Right lobe of liver (tissue), 6 donors: ENCODE measurements at regions of chr4 and their contacts with region 1.

Region 1: GRCh38 chr4:184889666-184890335 is 64.0 kb upstream of the ACSL1 start:
- DNase-seq: no peak
- ATAC-seq: no peak
- H3K4me3 ChIP-seq: no peak overlapping the region
- H3K27ac ChIP-seq: no peak overlapping the region
- H3K4me1 ChIP-seq: peaks cover 0 to 85% (median 36%) of the 10 kb centered on the region in 4 donors
- H3K27me3 ChIP-seq: no peaks in the 10 kb centered on the region
- CTCF ChIP-seq: no peak
- POLR2A ChIP-seq: no peak

Region 2: GRCh38 chr4:184815046-184815877 is 74.5 kb before region 1 on chr4:
- intact Hi-C with region 1: loop called in 1 of 2 experiments (anchors 10 kb)
- DNase-seq: peak; percentile 86 to 92 (median 91)
- ATAC-seq: peak; percentile 47 to 65 (median 54)
- H3K4me3 ChIP-seq: peak overlapping the region; percentile 3 to 41 (median 36)
- H3K27ac ChIP-seq: peak overlapping the region; percentile 89 to 98 (median 90)
- H3K4me1 ChIP-seq: peaks cover 0 to 82% (median 36%) of the 10 kb centered on the region in 4 donors
- H3K27me3 ChIP-seq: no peaks in the 10 kb centered on the region
- CTCF ChIP-seq: no peak
- POLR2A ChIP-seq: peak; percentile 63

Region 3: DNA sequence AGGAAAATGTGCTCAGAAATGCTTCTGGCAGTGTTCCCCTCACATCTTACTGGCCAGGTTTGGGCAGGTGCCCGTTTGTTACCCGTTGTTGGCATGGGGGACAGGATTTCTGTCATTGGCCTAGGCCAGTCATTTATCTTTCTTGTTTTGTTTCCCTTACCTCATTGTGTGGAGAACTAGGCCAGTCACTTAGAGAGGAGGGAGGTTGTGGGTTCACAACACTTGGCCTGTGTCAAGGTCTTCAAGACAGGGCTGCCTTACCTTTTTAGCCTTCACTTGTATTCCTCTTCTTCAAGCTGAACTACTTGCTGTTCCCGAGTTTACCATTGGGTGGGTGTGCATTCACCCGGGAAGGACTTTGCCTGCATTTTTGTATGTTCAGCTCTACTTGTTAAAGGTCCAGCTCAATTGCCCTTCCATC is 337.3 kb after region 1 on chr4:
- intact Hi-C with region 1: no loop called
- DNase-seq: no peak
- ATAC-seq: peak; percentile 24 to 79 (median 40)
- H3K4me3 ChIP-seq: no peak overlapping the region
- H3K27ac ChIP-seq: no peak overlapping the region
- H3K4me1 ChIP-seq: peaks cover 0 to 9% (median 0%) of the 10 kb centered on the region in 4 donors
- H3K27me3 ChIP-seq: no peaks in the 10 kb centered on the region
- CTCF ChIP-seq: peak in 1 of 4 donors; percentile 11
- POLR2A ChIP-seq: no peak